ENCODE measurements at regions of chr7 and their contacts with region 1.

Region 1: DNA sequence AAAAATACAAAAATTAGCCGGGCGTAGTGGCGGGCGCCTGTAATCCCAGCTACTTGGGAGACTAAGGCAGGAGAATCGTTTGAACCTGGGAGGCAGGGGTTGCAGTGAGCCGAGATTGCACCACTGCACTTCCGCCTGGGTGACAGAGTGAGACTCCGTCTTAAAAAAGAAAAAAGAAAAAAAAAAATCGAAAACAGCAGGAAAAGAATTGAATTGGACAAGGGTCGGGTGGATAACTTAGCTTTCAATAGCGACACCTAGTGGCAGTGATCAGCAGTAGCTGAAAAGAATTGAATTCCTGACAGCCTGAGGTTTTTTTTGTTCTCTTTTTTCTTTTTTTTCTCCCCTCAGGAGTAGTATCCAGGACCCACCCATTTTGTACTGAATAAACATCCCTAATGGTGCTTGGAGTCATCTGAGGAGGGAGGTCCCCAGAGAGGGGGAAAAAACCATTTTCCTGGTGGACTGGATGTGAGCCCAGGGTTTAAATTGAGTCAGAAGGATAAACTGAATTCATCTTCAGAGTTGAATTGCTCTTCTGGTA is 55.1 kb downstream of the CYCS start:
- DNase-seq: peak in 2 of 10 donors; percentile 19 to 50
- H3K4me3 ChIP-seq: peak overlapping the region in 55 of 59 donors; percentile 23 to 69 (median 49)
- H3K27ac ChIP-seq: peak overlapping the region in 5 of 59 donors; percentile 20 to 75 (median 69)
- H3K27me3 ChIP-seq: no peaks in the 10 kb centered on the region
- CTCF ChIP-seq: peak; percentile 87 to 100 (median 95)

Region 2: GRCh38 chr7:24819916-24820689 is 249.9 kb before region 1 on chr7:
- intact Hi-C with region 1: loop called (anchors 1 to 2 kb)
- DNase-seq: peak; percentile 32 to 87 (median 76)
- H3K4me3 ChIP-seq: peak overlapping the region in 5 of 59 donors; percentile 1 to 10 (median 8)
- H3K27ac ChIP-seq: peak overlapping the region in 44 of 59 donors; percentile 0 to 77 (median 52)
- H3K27me3 ChIP-seq: no peaks in the 10 kb centered on the region
- CTCF ChIP-seq: peak; percentile 83 to 97 (median 90)

Measured in dorsolateral prefrontal cortex (tissue), 120 donors.